ENCODE measurements at regions of chr13 and their contacts with region 1.

Region 1: DNA sequence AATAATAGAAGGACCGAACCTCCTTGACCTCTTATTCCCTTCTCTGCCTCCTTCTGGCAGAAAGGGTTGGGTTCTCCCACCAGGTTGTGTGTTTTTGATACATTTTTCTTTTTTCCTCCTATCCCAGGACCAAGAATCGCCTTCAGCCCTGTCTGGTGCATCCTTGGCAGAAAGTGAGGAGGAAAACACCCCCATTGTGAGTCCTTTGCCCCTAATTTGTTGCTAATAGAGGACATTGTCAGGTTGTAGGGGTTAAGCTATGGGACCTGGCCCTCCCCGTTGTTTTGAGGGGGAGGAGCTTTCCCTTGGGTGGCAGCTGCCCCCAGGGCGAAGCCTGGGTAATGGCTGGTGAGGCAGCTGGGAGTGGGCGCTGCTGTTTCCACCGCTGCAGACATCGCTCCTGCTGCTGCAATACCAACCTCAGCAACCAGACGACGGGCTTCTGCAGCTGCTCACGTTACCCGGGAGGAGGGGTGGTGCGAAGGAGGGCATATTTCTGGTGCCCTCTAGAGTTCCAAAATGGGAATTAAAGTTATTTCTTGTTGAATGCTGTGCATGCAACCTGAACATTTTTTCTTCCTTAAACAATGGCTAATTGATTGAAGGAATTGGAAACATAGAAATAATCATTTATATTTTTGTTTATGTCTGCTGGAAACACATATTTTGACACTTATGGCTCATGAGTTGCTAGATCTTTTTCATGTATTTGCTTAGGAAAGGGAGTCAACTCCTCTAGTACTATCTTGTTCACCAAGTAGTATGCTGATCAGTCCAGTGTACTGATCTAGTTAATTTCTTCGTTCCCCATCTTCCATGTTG is 1.5 kb downstream of the ZMYM2 start:
- DNase-seq: peak; percentile 92
- ATAC-seq: peak; percentile 49

Region 2: GRCh38 chr13:19633479-19634255 is 326.4 kb before region 1 on chr13 and contains the start of gene MPHOSPH8:
- intact Hi-C with region 1: loop called (anchors 5 kb)
- DNase-seq: peak; percentile 96
- ATAC-seq: peak; percentile 99
- total RNA-seq, gene MPHOSPH8: 25.0 TPM

Region 3: GRCh38 chr13:19782049-19782726 is 177.9 kb before region 1 on chr13:
- intact Hi-C with region 1: loop called (anchors 1 kb)
- DNase-seq: peak; percentile 82
- ATAC-seq: peak; percentile 71

Region 4: DNA sequence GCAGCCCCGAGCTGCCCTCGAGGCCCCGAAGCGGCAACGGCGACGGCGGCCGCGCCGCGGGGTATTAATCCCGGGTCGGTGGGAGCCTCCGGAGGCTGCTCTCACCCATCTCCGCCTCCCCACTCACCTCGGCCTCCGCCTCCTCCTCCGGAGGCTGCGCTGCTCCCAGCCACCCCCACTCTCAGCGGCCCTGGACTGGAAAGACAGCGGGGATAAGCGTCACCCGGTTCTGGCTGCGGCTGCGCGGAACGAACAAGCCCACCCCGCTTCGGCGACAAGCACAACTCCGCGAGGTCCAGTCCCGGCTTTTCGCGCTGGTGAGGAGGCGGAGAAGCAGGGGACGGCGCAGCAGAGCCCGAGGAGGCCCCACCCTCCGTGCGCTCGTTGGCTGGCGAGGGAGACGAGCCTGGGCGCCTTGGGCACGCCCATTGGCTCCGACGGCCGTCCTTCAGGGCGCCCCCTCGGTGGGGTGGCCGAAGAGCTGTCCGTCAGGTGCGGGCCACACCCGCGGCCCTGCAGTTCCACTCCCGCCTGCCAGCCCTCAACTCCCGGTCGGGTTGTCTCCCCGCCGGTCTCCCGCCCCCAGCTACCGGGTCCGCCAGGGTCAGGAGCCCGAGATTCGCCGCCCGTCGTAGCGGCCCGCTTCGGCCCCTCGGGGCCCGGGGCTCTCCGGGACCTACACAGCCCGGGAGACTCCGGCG is 96.6 kb before region 1 on chr13 and contains the start of gene ZMYM5:
- intact Hi-C with region 1: loop called (anchors 1 kb)
- DNase-seq: peak; percentile 99
- ATAC-seq: peak; percentile 98
- total RNA-seq, gene ZMYM5: 7.5 TPM

Measured in Right ventricle myocardium inferior (tissue), 1 donor.